Ascending aorta (tissue), 2 donors: ENCODE measurements at regions of chr9 and their contacts with region 1.

Region 1: DNA sequence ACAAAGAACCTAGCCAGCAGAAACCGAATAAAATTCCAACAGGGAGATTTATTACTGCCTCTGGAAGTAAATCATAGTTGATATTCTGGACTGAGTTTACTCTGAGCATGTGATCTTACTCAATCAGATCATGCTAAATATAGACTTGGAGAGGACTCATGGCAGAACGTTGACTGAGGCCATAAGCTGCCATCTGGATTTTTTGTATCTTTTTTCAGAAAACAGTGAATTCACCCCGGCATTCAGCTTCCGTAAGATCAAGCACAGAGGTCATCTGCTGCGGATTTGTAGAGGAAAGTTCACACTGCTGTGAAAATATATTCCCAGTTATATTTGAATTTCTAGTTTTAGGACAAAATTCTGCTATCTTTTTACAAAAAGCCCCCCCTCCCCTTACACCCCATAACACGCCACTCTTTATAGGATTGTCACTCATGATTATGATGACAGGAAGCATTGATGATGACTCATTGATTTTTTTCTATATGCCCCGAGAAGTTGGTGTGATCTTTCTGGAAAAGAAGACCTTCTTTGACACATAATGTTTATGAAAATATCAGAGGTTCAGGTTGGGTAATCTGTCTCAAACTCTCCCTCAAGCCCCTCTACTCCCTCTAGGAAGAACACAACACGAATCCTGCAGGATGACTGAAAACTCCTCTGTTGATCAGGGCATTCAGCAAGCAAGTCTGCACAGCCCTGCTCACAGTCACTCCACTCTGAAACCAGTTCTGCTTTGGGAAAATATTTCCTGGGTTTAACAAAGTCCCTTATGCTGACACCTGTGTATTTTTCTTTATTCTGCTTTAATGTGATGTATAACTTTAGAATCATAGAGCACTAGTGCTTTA is 70.8 kb downstream of the NXNL2 start:
- DNase-seq: no peak
- H3K4me3 ChIP-seq: peak overlapping the region in 1 of 2 donors; percentile 0
- H3K27ac ChIP-seq: peak overlapping the region; percentile 74 to 81
- H3K4me1 ChIP-seq: peaks cover 0 to 21% of the 10 kb centered on the region in 2 donors
- H3K27me3 ChIP-seq: no peaks in the 10 kb centered on the region
- CTCF ChIP-seq: no peak

Region 2: GRCh38 chr9:88502552-88503034 is 103.1 kb before region 1 on chr9:
- intact Hi-C with region 1: no loop called
- DNase-seq: no peak
- H3K4me3 ChIP-seq: no peak overlapping the region
- H3K27ac ChIP-seq: no peak overlapping the region
- H3K4me1 ChIP-seq: no peaks in the 10 kb centered on the region
- H3K27me3 ChIP-seq: no peaks in the 10 kb centered on the region
- CTCF ChIP-seq: no peak

Region 3: DNA sequence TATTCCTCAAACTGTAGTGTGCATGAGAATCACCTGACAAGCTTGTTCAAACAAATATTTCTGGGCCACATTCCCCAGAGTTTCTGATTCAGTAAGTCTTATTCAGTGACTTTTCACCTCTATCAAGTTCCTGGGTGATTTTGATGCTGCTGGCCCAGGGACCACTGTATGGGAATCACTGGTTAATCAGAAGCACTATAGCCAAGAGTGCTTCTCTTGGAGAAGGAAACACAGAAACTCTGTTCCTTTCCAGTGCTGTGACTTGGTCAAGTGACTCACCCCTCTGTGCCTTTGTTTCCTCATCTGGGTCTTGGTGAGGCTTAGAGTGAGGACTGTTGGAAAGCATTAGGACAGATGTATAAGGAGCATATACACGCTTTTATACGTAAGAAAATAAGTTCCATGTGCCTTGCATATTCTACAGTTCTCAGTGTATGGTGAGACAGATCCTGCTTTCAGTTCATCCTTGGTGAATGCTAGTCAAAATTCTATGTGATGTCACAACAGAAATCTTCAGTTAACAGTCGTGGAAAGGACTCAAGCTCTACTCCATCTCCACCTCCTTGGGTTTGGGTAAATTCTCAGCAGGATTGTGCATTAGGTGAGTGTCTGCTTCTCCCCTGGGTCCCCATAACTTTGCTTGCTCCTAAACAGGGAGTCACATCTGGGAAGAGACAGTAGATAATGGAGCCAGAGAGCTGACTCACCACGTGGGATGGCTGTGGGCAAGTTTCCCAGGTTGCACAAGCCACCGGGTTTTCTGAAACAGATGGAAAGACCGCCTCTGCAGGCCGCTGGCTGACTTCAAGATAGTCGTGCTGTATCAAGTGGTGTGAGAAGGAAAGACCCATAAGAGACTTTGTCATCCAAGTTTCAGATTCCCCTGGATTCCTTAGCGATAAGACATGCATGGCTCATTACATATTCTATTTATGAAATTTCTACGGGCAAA is 46.2 kb after region 1 on chr9:
- intact Hi-C with region 1: loop called (anchors 5 kb)
- DNase-seq: peak; percentile 35 to 92
- H3K4me3 ChIP-seq: no peak overlapping the region
- H3K27ac ChIP-seq: peak overlapping the region; percentile 16 to 47
- H3K4me1 ChIP-seq: peaks cover 0 to 10% of the 10 kb centered on the region in 2 donors
- H3K27me3 ChIP-seq: no peaks in the 10 kb centered on the region
- CTCF ChIP-seq: peak in 1 of 3 experiments; percentile 13

Region 4: DNA sequence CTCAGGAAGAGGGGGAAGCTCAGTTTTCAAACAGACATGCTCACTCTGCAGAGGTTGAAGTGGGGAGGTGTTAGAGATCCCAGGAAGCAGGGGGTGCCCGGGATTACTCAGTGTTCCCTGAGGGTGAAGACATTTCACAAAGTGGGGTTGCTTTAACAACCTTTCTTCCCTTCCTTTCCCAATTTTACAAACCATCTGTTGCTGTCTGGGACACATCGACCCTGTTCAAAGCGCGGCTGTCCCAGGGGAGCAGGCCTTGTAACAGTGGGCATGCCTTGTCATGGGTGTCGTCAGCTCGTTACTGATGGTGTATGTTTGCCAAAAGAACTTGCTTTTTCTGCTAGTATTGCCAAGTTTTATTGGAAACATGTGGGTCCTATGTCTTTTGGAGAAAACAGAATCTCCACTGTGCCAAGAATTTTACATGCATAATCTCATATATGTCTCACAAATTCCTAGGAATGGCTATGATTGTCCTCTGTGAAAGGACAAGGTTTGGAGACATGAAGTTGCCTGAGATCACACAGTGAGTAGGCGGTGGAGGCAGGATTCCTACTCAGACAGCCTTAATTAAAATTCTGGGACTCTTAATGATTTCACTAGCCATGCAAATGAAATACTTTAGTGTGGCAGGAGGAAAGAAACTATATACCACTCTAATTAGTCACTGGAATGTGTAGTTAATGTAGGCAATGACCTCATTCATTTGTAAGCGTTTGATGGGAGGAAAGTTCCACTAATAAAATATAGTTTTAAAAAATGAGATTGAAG is 128.1 kb after region 1 on chr9:
- intact Hi-C with region 1: loop called (anchors 5 kb)
- DNase-seq: peak in 1 of 2 donors; percentile 75
- H3K4me3 ChIP-seq: no peak overlapping the region
- H3K27ac ChIP-seq: no peak overlapping the region
- H3K4me1 ChIP-seq: peaks cover 0 to 6% of the 10 kb centered on the region in 2 donors
- H3K27me3 ChIP-seq: no peaks in the 10 kb centered on the region
- CTCF ChIP-seq: no peak